ENCODE measurements at regions of chr19 and their contacts with region 1.

Region 1: DNA sequence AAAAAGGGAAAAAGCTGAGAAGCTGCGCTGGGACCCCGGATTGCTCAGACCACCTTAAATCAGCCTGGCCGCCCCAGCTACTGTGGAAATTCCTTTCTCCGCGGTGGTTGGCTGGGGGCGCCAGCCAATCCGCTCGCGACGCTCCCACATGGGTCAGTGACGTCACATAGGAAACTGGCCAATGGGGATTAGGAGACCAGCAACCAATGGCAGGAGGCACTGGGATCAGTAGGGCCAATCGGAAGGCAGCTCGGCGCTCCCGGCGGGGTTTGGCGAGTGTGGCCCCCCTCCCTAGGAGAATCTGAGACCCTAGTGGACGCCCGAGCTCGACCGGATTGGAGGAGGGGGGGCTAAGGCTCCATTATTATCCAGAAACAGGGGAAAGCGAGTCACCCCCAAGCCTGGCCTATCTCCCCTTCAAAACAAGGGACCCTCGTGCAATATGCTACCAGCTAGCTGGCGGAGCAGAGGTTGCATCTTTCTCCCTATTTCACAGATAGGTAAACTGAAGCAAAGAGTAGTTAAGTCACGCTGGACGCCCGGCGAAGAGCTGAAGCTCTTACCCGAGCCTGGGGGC is 6.5 kb upstream of the TLE2 start:
- DNase-seq: peak; percentile 98
- H3K4me3 ChIP-seq: peak overlapping the region; percentile 49 to 69
- H3K27ac ChIP-seq: peak overlapping the region; percentile 74 to 83
- H3K4me1 ChIP-seq: peaks cover 0 to 14% of the 10 kb centered on the region in 2 experiments; a peak in 1 of 4 replicates
- H3K27me3 ChIP-seq: peaks cover 31% of the 10 kb centered on the region
- CTCF ChIP-seq: no peak
- EP300 ChIP-seq: peak; percentile 22 to 25; a peak in 1 of 4 replicates
- RAD21 ChIP-seq: no peak

Region 2: DNA sequence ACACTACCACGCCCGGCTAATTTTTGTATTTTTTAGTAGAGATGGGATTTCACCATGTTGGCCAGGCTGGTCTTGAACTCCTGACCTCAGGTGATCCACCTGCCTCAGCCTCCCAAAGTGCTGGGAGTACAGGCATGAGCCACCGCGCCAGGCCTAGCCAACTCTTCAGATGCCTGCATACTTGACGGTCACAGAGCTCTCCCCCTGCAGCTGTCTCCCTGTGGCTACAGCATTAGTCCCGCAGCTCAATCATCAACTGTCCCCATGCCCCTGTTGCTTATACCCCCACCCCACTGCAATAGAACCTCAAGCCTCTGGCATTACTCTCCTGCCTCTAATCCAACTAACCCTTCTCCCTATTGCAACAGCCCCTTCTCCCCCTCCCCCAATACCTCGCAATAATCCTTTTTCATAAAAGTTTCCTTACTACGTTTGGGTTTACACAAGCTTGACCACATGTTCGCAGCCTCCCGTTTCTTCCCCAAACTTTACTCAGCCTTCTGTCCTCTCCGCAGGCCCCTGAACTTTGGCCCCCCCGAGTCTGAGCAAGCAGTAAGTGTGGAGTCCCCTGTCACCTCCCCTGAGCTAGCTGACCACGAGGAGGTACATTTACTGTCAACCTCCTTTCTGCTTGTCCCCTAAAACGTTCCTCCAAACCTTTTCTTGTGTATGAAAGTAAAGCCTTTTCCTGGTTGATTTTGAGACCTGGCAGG is 92.5 kb before region 1 on chr19:
- CTCF ChIA-PET with region 1: no interaction called
- POLR2A ChIA-PET with region 1: no interaction called
- DNase-seq: no peak
- H3K4me3 ChIP-seq: no peak overlapping the region
- H3K27ac ChIP-seq: no peak overlapping the region
- H3K4me1 ChIP-seq: peaks cover 0 to 5% of the 10 kb centered on the region in 2 experiments; a peak in 1 of 4 replicates
- H3K27me3 ChIP-seq: no peaks in the 10 kb centered on the region
- CTCF ChIP-seq: no peak
- EP300 ChIP-seq: no peak
- RAD21 ChIP-seq: no peak

Region 3: DNA sequence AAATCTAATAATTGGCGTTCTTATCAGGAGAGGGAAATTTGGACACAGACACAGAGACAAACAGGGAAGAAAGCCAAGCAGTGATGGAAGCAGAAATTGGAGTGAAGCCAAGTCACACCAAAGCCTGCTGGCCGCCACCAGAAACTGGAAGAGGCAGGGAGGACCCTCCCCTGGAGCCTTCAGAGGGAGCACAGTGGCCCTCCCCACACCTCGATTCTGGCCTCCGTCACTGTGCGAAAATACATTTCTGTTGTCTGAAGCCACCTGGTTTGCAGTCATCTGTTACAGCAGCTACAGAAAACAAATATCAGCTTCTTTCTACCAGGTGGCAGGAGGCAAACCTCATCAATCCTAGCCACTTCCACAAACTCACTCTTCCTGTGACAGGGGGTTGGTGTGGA is 66.5 kb before region 1 on chr19:
- CTCF ChIA-PET with region 1: interaction called, 20 read pairs
- POLR2A ChIA-PET with region 1: interaction called, 9 read pairs
- DNase-seq: peak; percentile 59
- H3K4me3 ChIP-seq: no peak overlapping the region
- H3K27ac ChIP-seq: no peak overlapping the region
- H3K4me1 ChIP-seq: peaks cover 0 to 4% of the 10 kb centered on the region in 2 experiments; a peak in 1 of 4 replicates
- H3K27me3 ChIP-seq: no peaks in the 10 kb centered on the region
- CTCF ChIP-seq: no peak
- EP300 ChIP-seq: peak in 1 of 2 experiments; percentile 80; a peak in 2 of 4 replicates
- RAD21 ChIP-seq: peak; percentile 8

Region 4: GRCh38 chr19:2977001-2977685 is 58.5 kb before region 1 on chr19 and contains the start of gene TLE6:
- CTCF ChIA-PET with region 1: interaction called, 20 read pairs
- POLR2A ChIA-PET with region 1: interaction called, 21 read pairs
- DNase-seq: peak; percentile 97
- H3K4me3 ChIP-seq: peak within 1 kb of the TSS; percentile 42 to 65
- H3K27ac ChIP-seq: no peak within 1 kb of the TSS
- H3K4me1 ChIP-seq: peaks cover 0 to 8% of the 10 kb centered on the region in 2 experiments; a peak in 2 of 4 replicates
- H3K27me3 ChIP-seq: no peaks in the 10 kb centered on the region
- CTCF ChIP-seq: no peak
- EP300 ChIP-seq: peak; percentile 55 to 72; a peak in 2 of 4 replicates
- RAD21 ChIP-seq: no peak
- polyA plus RNA-seq, gene TLE6: 2.6 and 3.3 TPM in 2 replicates

Region 5: GRCh38 chr19:2983351-2984195 is 52.1 kb before region 1 on chr19:
- CTCF ChIA-PET with region 1: interaction called, 20 read pairs
- POLR2A ChIA-PET with region 1: interaction called, 21 read pairs
- DNase-seq: peak; percentile 87
- H3K4me3 ChIP-seq: peak overlapping the region; percentile 35 to 58
- H3K27ac ChIP-seq: peak overlapping the region; percentile 60 to 78
- H3K4me1 ChIP-seq: peaks cover 13 to 27% of the 10 kb centered on the region in 2 experiments; a peak in 3 of 4 replicates
- H3K27me3 ChIP-seq: no peaks in the 10 kb centered on the region
- CTCF ChIP-seq: no peak
- EP300 ChIP-seq: peak in 1 of 2 experiments; percentile 77; a peak in 2 of 4 replicates
- RAD21 ChIP-seq: peak; percentile 37; the same call in 1 of the 2 replicates

Region 6: GRCh38 chr19:3006075-3006767 is 29.4 kb before region 1 on chr19:
- CTCF ChIA-PET with region 1: interaction called, 3 read pairs
- POLR2A ChIA-PET with region 1: interaction called, 11 read pairs
- DNase-seq: no peak
- H3K4me3 ChIP-seq: no peak overlapping the region
- H3K27ac ChIP-seq: no peak overlapping the region
- H3K4me1 ChIP-seq: peaks cover 0 to 9% of the 10 kb centered on the region in 2 experiments; a peak in 1 of 4 replicates
- H3K27me3 ChIP-seq: peaks cover 14% of the 10 kb centered on the region; the same call in 1 of the 2 replicates
- CTCF ChIP-seq: no peak
- EP300 ChIP-seq: no peak
- RAD21 ChIP-seq: no peak

Region 7: DNA sequence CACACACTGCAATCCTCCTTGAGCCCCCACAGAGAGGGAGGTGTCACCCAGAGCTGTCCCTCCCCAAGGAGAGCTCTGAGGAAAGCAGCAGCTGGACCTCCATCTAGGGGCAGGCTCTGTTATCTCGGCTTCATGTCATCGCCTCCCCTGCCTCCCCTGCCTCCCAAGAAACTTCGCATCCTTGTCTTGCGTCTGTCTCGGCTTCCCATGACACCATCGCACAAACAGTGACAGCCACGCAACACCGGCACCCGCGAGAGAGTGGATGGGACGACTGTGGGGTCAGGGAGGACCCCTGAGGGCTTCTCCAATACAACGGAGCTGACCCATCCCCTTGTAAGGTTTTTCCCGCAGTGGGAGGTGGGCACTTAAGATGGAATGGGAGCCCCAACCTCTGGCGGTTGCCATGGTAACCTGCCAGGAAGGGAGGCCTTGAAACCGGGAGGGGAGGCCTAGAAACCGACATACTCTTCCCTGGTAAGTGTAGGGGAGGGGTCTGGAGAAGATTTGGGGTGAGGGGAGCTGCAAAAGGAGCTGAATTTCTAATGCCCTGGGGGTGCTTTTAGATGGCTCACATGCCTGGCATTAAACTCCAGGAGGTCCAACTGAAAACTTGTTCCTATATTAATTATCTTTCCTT is 22.9 kb before region 1 on chr19:
- CTCF ChIA-PET with region 1: interaction called, 17 read pairs
- POLR2A ChIA-PET with region 1: no interaction called
- DNase-seq: no peak
- H3K4me3 ChIP-seq: no peak overlapping the region
- H3K27ac ChIP-seq: no peak overlapping the region
- H3K4me1 ChIP-seq: no peaks in the 10 kb centered on the region
- H3K27me3 ChIP-seq: peaks cover 18% of the 10 kb centered on the region
- CTCF ChIP-seq: no peak
- EP300 ChIP-seq: no peak
- RAD21 ChIP-seq: no peak

Region 8: GRCh38 chr19:3062168-3063102 is 26.8 kb after region 1 on chr19 and contains the start of gene TLE5:
- CTCF ChIA-PET with region 1: interaction called, 17 read pairs
- POLR2A ChIA-PET with region 1: interaction called, 3 read pairs
- DNase-seq: peak; percentile 92
- H3K4me3 ChIP-seq: peak within 1 kb of the TSS; percentile 71 to 74
- H3K27ac ChIP-seq: peak within 1 kb of the TSS; percentile 56 to 83; a peak in 3 of 4 replicates
- H3K4me1 ChIP-seq: peaks cover 0 to 3% of the 10 kb centered on the region in 2 experiments; a peak in 1 of 4 replicates
- H3K27me3 ChIP-seq: no peaks in the 10 kb centered on the region
- CTCF ChIP-seq: no peak
- EP300 ChIP-seq: no peak
- RAD21 ChIP-seq: no peak
- polyA plus RNA-seq, gene TLE5: 479 and 519 TPM in 2 replicates